B cell (primary cell): ENCODE measurements at regions of chr2 and their contacts with region 1.

Region 1: DNA sequence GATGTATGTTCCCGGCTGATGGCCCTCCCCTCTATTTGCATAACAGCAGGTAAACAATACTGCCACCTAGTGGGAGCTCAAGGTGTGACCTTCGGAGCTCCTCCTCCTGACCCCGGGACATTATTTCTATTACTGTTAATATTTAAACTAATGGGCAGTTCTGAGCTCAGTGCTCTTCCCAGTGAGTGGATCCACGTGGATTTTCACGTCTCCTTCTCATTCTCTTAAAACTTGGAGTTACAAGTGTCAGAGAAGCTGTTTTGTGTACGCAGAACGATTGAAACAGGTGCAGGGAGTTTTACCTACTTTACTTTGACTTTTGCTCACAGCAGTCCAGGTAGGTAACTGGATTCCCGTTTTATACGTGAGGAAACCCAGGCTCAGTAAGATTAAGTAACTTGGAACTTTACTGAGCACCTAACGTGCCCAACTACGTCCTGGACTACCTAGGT is 127.3 kb downstream of the PRKCE start:
- DNase-seq: peak; percentile 83
- ATAC-seq: peak; percentile 83
- H3K4me3 ChIP-seq: peak overlapping the region in 2 of 5 experiments; percentile 4 to 16
- H3K4me3 Mint-ChIP-seq: peak overlapping the region; percentile 27
- H3K27ac ChIP-seq: no peak overlapping the region
- H3K27ac Mint-ChIP-seq: no peak overlapping the region
- H3K4me1 ChIP-seq: peaks cover 56 to 65% of the 10 kb centered on the region in 2 donors
- H3K4me1 Mint-ChIP-seq: peaks cover 69% of the 10 kb centered on the region
- H3K27me3 ChIP-seq: no peaks in the 10 kb centered on the region
- H3K27me3 Mint-ChIP-seq: no peaks in the 10 kb centered on the region
- CTCF ChIP-seq: peak; percentile 83

Region 2: GRCh38 chr2:45643543-45644542 is 134.9 kb before region 1 on chr2:
- CTCF ChIA-PET with region 1: interaction called, 86 read pairs
- POLR2A ChIA-PET with region 1: interaction called, 7 read pairs
- intact Hi-C with region 1: loop called (anchors 1 kb)
- DNase-seq: peak; percentile 86
- ATAC-seq: peak; percentile 96
- H3K4me3 ChIP-seq: peak overlapping the region in 4 of 5 experiments; percentile 35 to 54 (median 51)
- H3K4me3 Mint-ChIP-seq: peak overlapping the region; percentile 83
- H3K27ac ChIP-seq: peak overlapping the region in 1 of 2 donors; percentile 54
- H3K27ac Mint-ChIP-seq: no peak overlapping the region
- H3K4me1 ChIP-seq: peaks cover 13 to 19% of the 10 kb centered on the region in 2 donors
- H3K4me1 Mint-ChIP-seq: peaks cover 17% of the 10 kb centered on the region
- H3K27me3 ChIP-seq: peaks cover 0 to 16% (median 6%) of the 10 kb centered on the region in 4 experiments
- H3K27me3 Mint-ChIP-seq: peaks cover 29% of the 10 kb centered on the region
- CTCF ChIP-seq: peak; percentile 89

Region 3: GRCh38 chr2:45699032-45699658 is 79.6 kb before region 1 on chr2:
- CTCF ChIA-PET with region 1: interaction called, 12 read pairs
- POLR2A ChIA-PET with region 1: no interaction called
- intact Hi-C with region 1: loop called (anchors 5 kb)
- DNase-seq: no peak
- ATAC-seq: peak; percentile 13
- H3K4me3 ChIP-seq: no peak overlapping the region
- H3K4me3 Mint-ChIP-seq: peak overlapping the region; percentile 75
- H3K27ac ChIP-seq: peak overlapping the region; percentile 39 to 71
- H3K27ac Mint-ChIP-seq: peak overlapping the region; percentile 87
- H3K4me1 ChIP-seq: peaks cover 60 to 66% of the 10 kb centered on the region in 2 donors
- H3K4me1 Mint-ChIP-seq: peaks cover 63% of the 10 kb centered on the region
- H3K27me3 ChIP-seq: no peaks in the 10 kb centered on the region
- H3K27me3 Mint-ChIP-seq: no peaks in the 10 kb centered on the region
- CTCF ChIP-seq: no peak

Region 4: DNA sequence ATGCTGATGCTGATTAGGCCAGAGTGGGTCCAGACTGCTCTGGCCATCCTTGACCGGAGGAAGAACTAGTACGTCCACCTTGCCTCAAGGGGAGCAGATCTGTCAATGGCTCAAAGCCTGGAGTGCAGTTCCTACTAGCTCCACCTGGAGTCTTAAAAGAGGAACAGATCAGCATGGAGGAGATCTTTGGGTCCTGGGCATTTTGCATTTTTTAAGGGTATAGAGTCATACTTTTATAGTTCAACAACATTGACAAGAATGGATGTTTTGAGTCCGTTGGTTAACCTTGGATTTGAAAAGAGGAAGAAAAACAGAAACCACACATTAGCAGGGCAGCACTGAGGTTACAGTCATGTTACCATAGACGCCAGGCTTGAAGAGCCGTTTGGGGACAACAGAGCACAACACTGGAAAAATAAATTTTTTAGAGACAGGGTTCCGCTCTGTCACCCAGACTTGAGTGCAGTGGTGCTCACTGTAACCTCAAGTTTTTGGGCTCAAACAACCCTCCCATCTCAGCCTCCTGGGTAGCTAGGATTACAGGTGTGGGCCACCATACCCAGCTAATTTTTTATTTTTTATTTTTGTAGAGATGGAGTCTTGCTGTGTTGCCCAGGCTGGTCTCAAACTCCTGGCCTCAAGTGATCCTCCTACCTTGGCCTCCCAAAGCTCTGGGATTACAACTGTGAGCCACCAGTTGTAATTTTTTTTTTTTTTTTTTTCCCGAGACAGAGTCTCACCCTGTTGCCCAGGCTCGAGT is 48.8 kb before region 1 on chr2:
- CTCF ChIA-PET with region 1: interaction called, 46 read pairs
- POLR2A ChIA-PET with region 1: interaction called, 3 read pairs
- intact Hi-C with region 1: loop called (anchors 1 kb)
- DNase-seq: peak; percentile 90
- ATAC-seq: peak; percentile 60
- H3K4me3 ChIP-seq: peak overlapping the region in 1 of 5 experiments; percentile 34
- H3K4me3 Mint-ChIP-seq: peak overlapping the region; percentile 79
- H3K27ac ChIP-seq: peak overlapping the region; percentile 91 to 98
- H3K27ac Mint-ChIP-seq: peak overlapping the region; percentile 97
- H3K4me1 ChIP-seq: peaks cover 78 to 87% of the 10 kb centered on the region in 2 donors
- H3K4me1 Mint-ChIP-seq: peaks cover 83% of the 10 kb centered on the region
- H3K27me3 ChIP-seq: no peaks in the 10 kb centered on the region
- H3K27me3 Mint-ChIP-seq: no peaks in the 10 kb centered on the region
- CTCF ChIP-seq: peak; percentile 73

Region 5: GRCh38 chr2:45739796-45740485 is 38.8 kb before region 1 on chr2:
- CTCF ChIA-PET with region 1: interaction called, 10 read pairs
- POLR2A ChIA-PET with region 1: no interaction called
- intact Hi-C with region 1: no loop called
- DNase-seq: no peak
- ATAC-seq: no peak
- H3K4me3 ChIP-seq: no peak overlapping the region
- H3K4me3 Mint-ChIP-seq: no peak overlapping the region
- H3K27ac ChIP-seq: no peak overlapping the region
- H3K27ac Mint-ChIP-seq: no peak overlapping the region
- H3K4me1 ChIP-seq: peaks cover 34 to 41% of the 10 kb centered on the region in 2 donors
- H3K4me1 Mint-ChIP-seq: peaks cover 77% of the 10 kb centered on the region
- H3K27me3 ChIP-seq: no peaks in the 10 kb centered on the region
- H3K27me3 Mint-ChIP-seq: no peaks in the 10 kb centered on the region
- CTCF ChIP-seq: no peak

Region 6: GRCh38 chr2:45845566-45845965 is 66.8 kb after region 1 on chr2:
- CTCF ChIA-PET with region 1: no interaction called
- POLR2A ChIA-PET with region 1: no interaction called
- intact Hi-C with region 1: no loop called
- DNase-seq: no peak
- ATAC-seq: no peak
- H3K4me3 ChIP-seq: no peak overlapping the region
- H3K4me3 Mint-ChIP-seq: no peak overlapping the region
- H3K27ac ChIP-seq: no peak overlapping the region
- H3K27ac Mint-ChIP-seq: no peak overlapping the region
- H3K4me1 ChIP-seq: peaks cover 31 to 50% of the 10 kb centered on the region in 2 donors
- H3K4me1 Mint-ChIP-seq: peaks cover 59% of the 10 kb centered on the region
- H3K27me3 ChIP-seq: no peaks in the 10 kb centered on the region
- H3K27me3 Mint-ChIP-seq: no peaks in the 10 kb centered on the region
- CTCF ChIP-seq: no peak

Region 7: DNA sequence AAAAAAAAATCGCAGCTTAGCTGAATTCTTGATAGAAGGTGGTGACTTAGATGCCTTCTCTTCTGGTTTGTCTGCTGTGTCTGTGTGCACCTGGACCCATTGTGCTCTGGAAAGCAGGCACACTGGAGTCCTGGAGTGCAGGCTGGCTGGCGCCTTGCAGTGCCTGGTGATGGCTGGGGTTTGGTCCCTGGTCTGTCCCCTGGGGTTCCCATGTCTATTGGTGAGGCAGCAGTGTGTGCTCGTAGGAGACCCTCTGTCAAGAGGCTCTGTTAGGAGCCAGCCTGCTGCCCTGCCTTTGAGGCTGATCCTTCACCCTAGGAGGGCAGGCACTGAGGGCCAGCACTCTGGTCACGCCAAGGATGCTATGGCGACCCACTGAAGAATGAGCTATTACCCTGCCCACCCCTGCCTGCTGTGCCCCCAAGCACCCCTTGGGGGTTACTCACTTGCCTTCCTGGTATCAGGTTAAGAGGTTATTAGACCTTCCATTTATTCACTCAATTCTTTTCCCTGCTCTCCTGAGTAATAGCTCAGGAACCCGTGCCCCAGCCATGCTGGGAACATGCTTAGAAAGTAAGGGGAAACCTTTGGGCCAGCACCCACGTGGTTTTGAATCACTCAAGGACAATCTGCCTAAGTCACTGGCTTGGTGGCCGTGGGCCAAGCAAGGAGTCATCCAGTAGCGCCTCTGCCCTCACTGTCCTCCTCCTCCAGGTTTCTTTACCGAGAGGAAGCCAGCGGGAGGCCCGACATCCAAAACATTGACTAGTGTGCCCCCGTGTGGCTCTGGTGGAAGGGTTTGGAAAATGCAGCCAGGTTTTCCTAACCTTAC is 157.3 kb after region 1 on chr2:
- CTCF ChIA-PET with region 1: interaction called, 12 read pairs
- POLR2A ChIA-PET with region 1: no interaction called
- intact Hi-C with region 1: loop called (anchors 1 kb)
- DNase-seq: peak; percentile 74
- ATAC-seq: peak; percentile 64
- H3K4me3 ChIP-seq: no peak overlapping the region
- H3K4me3 Mint-ChIP-seq: no peak overlapping the region
- H3K27ac ChIP-seq: no peak overlapping the region
- H3K27ac Mint-ChIP-seq: no peak overlapping the region
- H3K4me1 ChIP-seq: peaks cover 6 to 10% of the 10 kb centered on the region in 2 donors
- H3K4me1 Mint-ChIP-seq: peaks cover 18% of the 10 kb centered on the region
- H3K27me3 ChIP-seq: no peaks in the 10 kb centered on the region
- H3K27me3 Mint-ChIP-seq: no peaks in the 10 kb centered on the region
- CTCF ChIP-seq: peak; percentile 60

Region 8: DNA sequence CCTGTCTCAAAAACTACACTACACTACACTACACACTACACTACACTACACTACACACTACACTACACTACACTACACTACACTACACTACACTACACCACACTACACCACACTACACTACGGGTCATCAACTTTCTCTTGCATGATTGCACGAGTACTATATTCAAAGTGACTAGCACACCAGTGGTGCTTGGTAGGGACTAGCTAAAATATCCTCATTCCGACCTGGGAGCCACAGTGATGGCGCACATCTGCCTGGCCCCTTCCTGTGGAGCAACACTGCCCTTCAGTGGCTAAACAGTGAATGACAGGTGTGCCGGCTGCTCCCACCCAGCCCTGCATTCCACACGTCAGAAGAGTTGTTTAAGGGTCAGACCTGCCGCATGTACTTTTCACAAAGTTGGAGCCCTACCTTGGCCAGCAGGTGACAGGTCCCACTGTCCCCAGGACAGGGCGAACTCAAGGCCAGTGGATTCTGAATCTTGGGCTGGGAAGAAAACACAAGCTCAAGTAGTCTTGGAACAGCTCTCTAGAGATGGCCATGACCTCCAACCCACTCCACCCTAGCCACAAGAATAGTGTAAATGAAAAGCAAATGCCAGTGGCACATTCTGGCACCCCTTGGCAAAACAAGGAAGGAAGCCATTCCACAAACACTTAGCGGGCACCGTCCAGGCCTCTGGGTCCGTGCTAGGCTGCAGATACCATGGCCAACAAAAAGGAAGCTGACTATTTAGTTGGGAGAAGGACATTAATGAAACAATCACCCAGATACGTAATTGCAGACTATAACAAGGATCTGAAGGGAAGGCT is 1544.5 kb after region 1 on chr2:
- CTCF ChIA-PET with region 1: no interaction called
- POLR2A ChIA-PET with region 1: no interaction called
- intact Hi-C with region 1: no loop called
- DNase-seq: peak; percentile 84
- ATAC-seq: peak; percentile 100
- H3K4me3 ChIP-seq: no peak overlapping the region
- H3K4me3 Mint-ChIP-seq: no peak overlapping the region
- H3K27ac ChIP-seq: no peak overlapping the region
- H3K27ac Mint-ChIP-seq: no peak overlapping the region
- H3K4me1 ChIP-seq: peaks cover 10 to 31% of the 10 kb centered on the region in 2 donors
- H3K4me1 Mint-ChIP-seq: peaks cover 8% of the 10 kb centered on the region
- H3K27me3 ChIP-seq: peaks cover 0 to 3% (median 0%) of the 10 kb centered on the region in 4 experiments
- H3K27me3 Mint-ChIP-seq: no peaks in the 10 kb centered on the region
- CTCF ChIP-seq: peak; percentile 92